ENCODE measurements at regions of chr5 and their contacts with region 1.

Region 1: DNA sequence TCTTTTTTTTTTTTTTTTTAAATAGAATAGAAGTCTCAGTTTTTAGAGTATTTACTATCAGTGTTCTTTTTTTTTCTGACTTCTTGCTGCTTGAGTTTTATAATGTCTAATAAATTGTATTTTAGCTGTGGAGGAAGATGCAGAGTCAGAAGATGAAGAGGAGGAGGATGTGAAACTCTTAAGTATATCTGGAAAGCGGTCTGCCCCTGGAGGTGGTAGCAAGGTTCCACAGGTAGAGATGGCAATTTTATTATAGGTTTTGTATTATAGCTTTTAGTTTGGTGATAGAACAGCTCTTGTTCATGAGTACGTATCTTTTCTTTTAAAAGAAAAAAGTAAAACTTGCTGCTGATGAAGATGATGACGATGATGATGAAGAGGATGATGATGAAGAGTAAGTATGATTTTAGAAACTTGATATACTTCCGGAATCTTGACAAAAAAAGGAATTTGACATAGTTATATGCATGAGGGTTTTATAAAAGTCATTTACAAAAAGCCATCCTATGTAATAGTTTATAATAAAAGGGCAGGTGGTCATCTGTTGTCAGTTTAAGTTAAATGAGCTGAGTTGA is 5.0 kb downstream of the NPM1 start:
- DNase-seq: no peak
- H3K4me3 ChIP-seq: no peak overlapping the region
- CTCF ChIP-seq: no peak

Region 2: DNA sequence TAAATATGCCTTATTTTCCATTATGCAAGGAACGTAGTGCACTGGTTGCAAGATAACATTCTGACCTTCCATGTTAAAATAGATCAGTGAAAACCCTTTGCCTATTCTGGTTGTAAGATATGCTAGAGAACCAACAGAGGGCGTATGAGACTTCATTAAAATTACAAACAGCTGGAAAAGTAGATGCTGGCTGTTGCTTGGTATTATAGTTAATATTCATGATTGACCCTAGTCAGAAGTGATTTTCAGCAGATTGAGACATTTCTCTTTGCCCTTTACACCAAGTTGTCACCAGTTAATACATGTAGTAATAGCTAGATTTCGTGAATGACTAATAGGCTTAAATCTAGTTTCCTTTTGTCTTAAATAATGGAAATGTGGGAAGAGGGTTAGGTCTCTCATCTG is 12.9 kb after region 1 on chr5:
- CTCF ChIA-PET with region 1: interaction called, 16 read pairs
- POLR2A ChIA-PET with region 1: interaction called, 5 read pairs
- DNase-seq: no peak
- H3K4me3 ChIP-seq: no peak overlapping the region
- CTCF ChIP-seq: peak; percentile 35

Region 3: DNA sequence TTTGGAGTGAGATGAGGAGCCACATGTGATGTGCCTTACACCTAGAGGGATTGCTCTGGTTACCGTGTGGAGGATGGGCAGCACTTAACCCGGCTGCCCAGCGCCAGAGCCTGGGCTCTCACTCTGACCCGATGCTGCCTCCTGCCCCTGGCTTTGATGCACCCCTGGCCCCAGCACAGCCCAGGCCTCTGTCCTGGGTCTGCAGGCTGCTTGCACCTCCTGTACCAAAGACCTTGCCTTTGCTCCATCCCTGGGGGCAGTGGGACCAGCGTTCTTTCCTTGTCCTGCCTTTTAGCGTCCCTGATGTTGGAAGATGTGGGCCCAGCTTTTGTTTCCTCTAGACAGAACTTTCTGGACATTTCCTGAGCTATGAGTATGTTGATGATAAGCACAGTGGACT is 67.2 kb after region 1 on chr5:
- CTCF ChIA-PET with region 1: no interaction called
- POLR2A ChIA-PET with region 1: no interaction called
- DNase-seq: no peak
- H3K4me3 ChIP-seq: no peak overlapping the region
- CTCF ChIP-seq: no peak

Measured in AG04449 (cell line).